GM10248 (cell line): ENCODE measurements at regions of chr14 and their contacts with region 1.

Region 1: DNA sequence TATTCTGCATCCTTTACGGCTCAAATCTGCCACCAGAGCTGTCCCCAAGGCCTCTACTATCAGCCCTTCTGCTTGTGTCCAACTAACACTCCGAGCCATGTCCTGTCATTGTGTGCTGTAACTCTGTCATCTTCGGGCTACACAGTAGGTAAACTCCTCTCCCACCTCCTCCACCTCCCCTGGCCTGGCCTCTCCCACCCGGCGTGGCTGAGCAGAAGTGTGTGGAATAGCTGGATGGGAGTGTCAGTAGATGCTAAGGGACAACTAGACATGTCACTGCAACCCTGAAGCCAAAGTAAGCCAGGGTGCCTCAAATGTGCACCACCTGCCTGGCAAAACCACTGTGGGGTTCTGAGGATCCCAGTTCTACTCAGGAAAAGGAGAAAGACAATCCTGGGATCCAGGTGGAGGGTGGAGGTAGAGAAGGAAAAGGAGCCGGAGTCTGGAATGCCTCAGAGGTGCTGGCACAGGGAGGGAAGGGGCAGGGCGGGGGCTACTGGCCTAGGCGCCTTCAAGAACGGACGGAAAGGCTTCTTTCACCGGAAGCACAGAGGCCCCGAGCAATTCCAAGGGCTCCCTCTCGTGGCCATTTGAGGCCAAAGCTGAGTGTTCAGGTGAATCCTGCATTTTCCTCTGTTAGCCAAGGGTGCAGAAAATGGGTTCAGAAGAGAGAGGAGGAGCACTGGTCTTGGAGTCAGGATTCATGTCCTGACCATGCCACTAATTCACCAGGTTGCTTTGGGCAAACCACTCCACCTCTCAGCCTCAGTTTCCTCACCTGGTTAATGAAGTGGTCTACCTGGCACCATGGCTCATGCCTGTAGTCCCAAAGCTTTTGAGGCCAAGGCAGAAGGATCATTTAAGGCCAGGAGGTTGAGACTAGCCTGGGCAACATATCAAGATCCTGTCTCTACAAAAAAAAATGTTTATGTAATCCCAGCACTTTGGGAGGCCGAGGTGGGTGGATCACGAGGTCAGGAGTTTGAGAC is 20.5 kb upstream of the FAM181A start:
- DNase-seq: peak; percentile 86
- CTCF ChIP-seq: peak; percentile 81

Region 2: DNA sequence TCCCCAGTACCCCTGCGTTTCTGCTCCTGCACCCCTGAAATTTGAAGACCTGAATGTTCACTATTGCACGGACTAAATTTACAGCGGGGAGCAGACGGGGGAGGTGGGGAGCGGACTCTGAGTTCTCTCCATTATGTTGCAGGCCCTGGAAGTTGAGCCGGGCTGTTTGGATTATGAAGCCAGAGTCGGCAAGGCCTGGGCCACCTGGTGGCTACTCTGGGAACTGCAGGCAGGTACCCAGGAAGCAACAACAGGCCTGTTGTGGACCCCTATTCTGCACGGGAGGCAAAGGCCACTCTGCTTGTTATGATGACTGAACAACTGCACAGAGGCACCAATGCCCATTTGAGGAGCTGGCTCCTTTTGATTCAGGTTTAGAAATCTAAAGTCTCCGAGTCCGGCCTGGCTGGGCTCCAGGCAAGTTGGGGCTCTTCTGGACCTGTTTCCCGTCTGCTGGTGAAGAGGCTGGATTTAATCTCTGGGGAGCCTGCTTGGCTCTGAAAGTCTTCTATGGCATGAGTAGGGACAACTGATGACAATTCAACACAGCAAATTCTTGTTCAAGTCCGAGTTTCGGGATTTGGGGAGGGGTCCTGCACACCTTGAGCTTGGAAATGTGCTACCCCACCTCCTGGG is 13.6 kb before region 1 on chr14:
- CTCF ChIA-PET with region 1: interaction called, 11 read pairs
- POLR2A ChIA-PET with region 1: no interaction called
- DNase-seq: peak; percentile 81
- CTCF ChIP-seq: peak; percentile 91